CD8-positive, alpha-beta T cell (primary cell): ENCODE measurements at regions of chr14 and their contacts with region 1.

Region 1: DNA sequence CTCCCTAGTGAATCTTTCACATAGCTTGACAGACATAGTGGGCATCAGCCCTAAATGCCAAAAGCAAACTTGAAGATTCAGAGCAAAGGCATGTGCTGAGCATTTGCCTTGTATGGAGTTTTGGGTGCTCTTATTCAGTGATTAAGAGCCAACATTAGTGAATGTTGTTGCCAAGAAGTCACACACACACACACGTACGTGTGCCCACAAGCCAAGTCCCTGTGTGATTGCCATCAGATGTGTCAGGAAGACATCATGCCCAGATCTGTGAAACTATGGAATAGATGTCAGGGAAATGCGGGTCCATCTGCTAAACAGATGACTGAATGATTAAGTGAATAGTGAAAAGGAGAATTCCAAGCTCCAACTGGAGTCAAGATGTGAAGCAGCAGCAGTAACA is 149.0 kb downstream of the AKAP6 start:
- DNase-seq: no peak
- ATAC-seq: no peak
- H3K4me3 ChIP-seq: no peak overlapping the region
- H3K4me3 Mint-ChIP-seq: no peak overlapping the region
- H3K27ac ChIP-seq: no peak overlapping the region
- H3K27ac Mint-ChIP-seq: no peak overlapping the region
- H3K4me1 ChIP-seq: no peaks in the 10 kb centered on the region
- H3K4me1 Mint-ChIP-seq: no peaks in the 10 kb centered on the region
- H3K27me3 ChIP-seq: no peaks in the 10 kb centered on the region
- H3K27me3 Mint-ChIP-seq: peaks cover 2% of the 10 kb centered on the region
- CTCF ChIP-seq: no peak

Region 2: GRCh38 chr14:31864937-31865855 is 612.9 kb before region 1 on chr14:
- CTCF ChIA-PET with region 1: no interaction called
- POLR2A ChIA-PET with region 1: no interaction called
- intact Hi-C with region 1: loop called in 1 of 2 experiments (anchors 5 kb)
- DNase-seq: no peak
- ATAC-seq: no peak
- H3K4me3 ChIP-seq: no peak overlapping the region
- H3K4me3 Mint-ChIP-seq: no peak overlapping the region
- H3K27ac ChIP-seq: no peak overlapping the region
- H3K27ac Mint-ChIP-seq: no peak overlapping the region
- H3K4me1 ChIP-seq: no peaks in the 10 kb centered on the region
- H3K4me1 Mint-ChIP-seq: no peaks in the 10 kb centered on the region
- H3K27me3 ChIP-seq: no peaks in the 10 kb centered on the region
- H3K27me3 Mint-ChIP-seq: no peaks in the 10 kb centered on the region
- CTCF ChIP-seq: no peak

Region 3: GRCh38 chr14:32457213-32457920 is 20.7 kb before region 1 on chr14:
- CTCF ChIA-PET with region 1: no interaction called
- POLR2A ChIA-PET with region 1: no interaction called
- intact Hi-C with region 1: no loop called
- DNase-seq: no peak
- ATAC-seq: no peak
- H3K4me3 ChIP-seq: no peak overlapping the region
- H3K4me3 Mint-ChIP-seq: no peak overlapping the region
- H3K27ac ChIP-seq: no peak overlapping the region
- H3K27ac Mint-ChIP-seq: no peak overlapping the region
- H3K4me1 ChIP-seq: no peaks in the 10 kb centered on the region
- H3K4me1 Mint-ChIP-seq: no peaks in the 10 kb centered on the region
- H3K27me3 ChIP-seq: no peaks in the 10 kb centered on the region
- H3K27me3 Mint-ChIP-seq: peaks cover 10% of the 10 kb centered on the region
- CTCF ChIP-seq: no peak

Region 4: DNA sequence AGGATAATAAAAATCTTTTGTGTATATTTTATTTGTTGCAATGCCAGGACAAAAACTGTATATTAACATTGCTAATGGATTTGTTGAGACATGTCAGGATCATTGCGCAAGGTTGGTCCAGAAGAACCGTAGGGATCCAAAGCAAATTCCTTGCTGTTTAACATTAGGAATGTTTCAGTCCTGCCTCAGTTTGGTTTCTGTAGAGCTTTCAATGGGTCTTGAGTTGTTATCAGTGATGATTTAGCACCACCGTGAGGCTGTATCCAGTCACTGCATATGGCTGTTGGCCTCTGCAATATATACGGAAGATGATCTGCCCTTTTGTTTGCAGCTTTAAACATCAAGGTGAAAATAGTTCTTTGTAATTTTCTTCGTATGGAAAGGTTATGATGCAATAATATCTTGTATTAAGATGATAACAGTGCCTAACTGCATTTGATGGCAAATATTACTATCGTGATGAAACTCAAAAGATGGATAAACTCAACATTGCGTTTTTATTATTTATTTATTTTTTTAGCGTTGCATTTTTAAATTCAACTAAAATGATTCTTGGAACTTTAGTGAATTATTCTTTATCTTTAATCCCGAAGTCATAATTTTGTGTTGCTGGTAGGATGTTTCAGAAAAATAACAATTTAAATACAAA is 82.3 kb after region 1 on chr14:
- CTCF ChIA-PET with region 1: no interaction called
- POLR2A ChIA-PET with region 1: no interaction called
- intact Hi-C with region 1: no loop called
- DNase-seq: peak in 3 of 9 experiments; percentile 0 to 37 (median 18)
- ATAC-seq: no peak
- H3K4me3 ChIP-seq: no peak overlapping the region
- H3K4me3 Mint-ChIP-seq: no peak overlapping the region
- H3K27ac ChIP-seq: no peak overlapping the region
- H3K27ac Mint-ChIP-seq: no peak overlapping the region
- H3K4me1 ChIP-seq: no peaks in the 10 kb centered on the region
- H3K4me1 Mint-ChIP-seq: peaks cover 12% of the 10 kb centered on the region
- H3K27me3 ChIP-seq: no peaks in the 10 kb centered on the region
- H3K27me3 Mint-ChIP-seq: no peaks in the 10 kb centered on the region
- CTCF ChIP-seq: peak; percentile 50